Natural killer cell (primary cell): ENCODE measurements at regions of chr2 and their contacts with region 1.

Region 1: GRCh38 chr2:181058378-181059269 is 78.2 kb downstream of the UBE2E3 start:
- DNase-seq: peak in 1 of 2 donors; percentile 73
- ATAC-seq: peak; percentile 55 to 73 (median 70)
- H3K4me3 ChIP-seq: no peak overlapping the region
- H3K4me3 Mint-ChIP-seq: no peak overlapping the region
- H3K27ac ChIP-seq: no peak overlapping the region
- H3K27ac Mint-ChIP-seq: no peak overlapping the region
- H3K4me1 ChIP-seq: no peaks in the 10 kb centered on the region
- H3K4me1 Mint-ChIP-seq: peaks cover 2 to 20% of the 10 kb centered on the region in 2 donors
- H3K27me3 ChIP-seq: no peaks in the 10 kb centered on the region
- H3K27me3 Mint-ChIP-seq: no peaks in the 10 kb centered on the region
- CTCF ChIP-seq: peak; percentile 92

Region 2: DNA sequence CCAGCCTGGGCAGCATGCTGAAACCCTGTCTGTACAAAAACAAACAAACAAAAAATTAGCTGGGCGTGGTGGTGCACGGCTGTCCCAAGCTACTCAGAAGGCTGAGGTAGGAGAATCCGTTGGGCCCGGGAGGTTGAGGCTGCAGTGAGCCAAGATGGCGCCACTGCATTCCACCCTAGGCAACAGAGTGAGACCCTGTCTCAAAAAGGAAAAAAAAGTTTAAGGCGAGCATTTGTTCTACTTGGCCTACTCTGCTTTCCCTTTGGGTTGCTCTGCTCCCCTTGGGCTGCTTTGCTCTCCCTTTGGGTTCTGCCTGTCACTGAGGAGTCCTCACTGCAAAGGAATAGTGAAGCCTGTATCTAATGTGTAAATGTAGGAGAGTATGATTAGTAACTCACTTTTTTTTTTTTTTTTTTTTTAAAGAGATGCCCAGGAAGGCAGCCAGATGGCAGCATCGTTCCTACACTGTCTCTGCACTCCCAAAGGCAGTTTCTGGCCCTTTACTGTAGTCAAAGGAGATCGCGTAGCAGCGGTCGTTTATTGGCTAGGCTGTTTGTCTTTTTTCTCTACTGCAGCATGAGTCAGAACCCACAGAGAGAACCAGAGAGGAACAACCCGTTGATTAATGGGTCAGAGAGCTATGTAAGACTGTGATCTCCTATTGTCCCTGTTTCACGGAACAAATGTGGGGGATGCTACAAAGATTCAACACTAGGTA is 933.2 kb before region 1 on chr2:
- intact Hi-C with region 1: loop called (anchors 1 kb)
- DNase-seq: peak in 1 of 2 donors; percentile 67
- ATAC-seq: peak; percentile 63 to 83 (median 79)
- H3K4me3 ChIP-seq: no peak overlapping the region
- H3K4me3 Mint-ChIP-seq: no peak overlapping the region
- H3K27ac ChIP-seq: no peak overlapping the region
- H3K27ac Mint-ChIP-seq: no peak overlapping the region
- H3K4me1 ChIP-seq: no peaks in the 10 kb centered on the region
- H3K4me1 Mint-ChIP-seq: peaks cover 0 to 5% of the 10 kb centered on the region in 2 donors
- H3K27me3 ChIP-seq: no peaks in the 10 kb centered on the region
- H3K27me3 Mint-ChIP-seq: peaks cover 0 to 20% of the 10 kb centered on the region in 2 donors
- CTCF ChIP-seq: peak; percentile 27

Region 3: DNA sequence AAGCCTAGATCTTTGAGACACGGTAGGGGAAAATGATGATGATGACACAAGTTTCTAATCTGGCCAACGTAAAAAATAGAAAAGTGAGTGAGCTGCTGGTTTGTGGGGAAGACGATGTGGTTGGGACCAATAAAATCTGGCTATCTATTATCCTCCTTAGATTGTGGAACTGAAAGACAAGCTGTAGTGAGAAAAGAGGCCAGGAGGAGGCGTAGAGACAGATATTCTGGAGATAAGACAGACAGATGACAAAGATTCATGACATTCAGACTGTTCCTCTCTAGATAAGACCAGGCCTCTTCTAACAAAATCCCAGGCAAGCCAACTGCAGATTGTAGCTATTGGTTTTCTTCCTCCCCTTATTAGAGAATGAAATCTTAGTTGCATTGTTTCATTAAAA is 454.5 kb before region 1 on chr2:
- intact Hi-C with region 1: loop called (anchors 5 kb)
- DNase-seq: peak in 1 of 2 donors; percentile 24
- ATAC-seq: no peak
- H3K4me3 ChIP-seq: no peak overlapping the region
- H3K4me3 Mint-ChIP-seq: no peak overlapping the region
- H3K27ac ChIP-seq: no peak overlapping the region
- H3K27ac Mint-ChIP-seq: no peak overlapping the region
- H3K4me1 ChIP-seq: no peaks in the 10 kb centered on the region
- H3K4me1 Mint-ChIP-seq: no peaks in the 10 kb centered on the region
- H3K27me3 ChIP-seq: no peaks in the 10 kb centered on the region
- H3K27me3 Mint-ChIP-seq: no peaks in the 10 kb centered on the region
- CTCF ChIP-seq: no peak

Region 4: DNA sequence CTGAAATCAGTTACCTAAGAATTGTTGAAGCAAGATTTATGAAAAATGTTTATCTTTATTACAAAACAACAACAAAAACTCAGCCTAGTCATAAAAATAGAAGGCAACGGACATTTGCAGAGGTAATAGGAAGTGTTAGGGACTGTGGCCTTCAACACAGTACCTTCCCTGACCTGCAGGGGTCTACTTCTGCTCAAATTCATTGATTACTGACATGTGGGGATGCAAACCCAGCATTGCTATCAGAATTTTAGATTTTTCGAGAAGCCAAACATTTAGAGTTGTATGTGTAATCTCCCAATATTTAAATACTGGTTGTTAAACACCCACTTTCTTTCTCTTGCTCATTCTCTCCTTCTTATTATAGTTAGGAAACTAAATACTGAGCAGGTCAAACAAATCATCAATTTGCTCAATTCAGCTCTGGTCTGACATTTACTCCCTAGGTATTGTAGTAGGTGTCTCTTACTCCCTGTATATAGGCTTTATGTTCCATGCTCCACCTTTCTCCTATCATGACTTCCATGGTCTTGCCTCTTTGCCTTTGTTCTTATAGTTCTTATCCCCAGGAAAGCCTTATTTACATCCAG is 120.3 kb after region 1 on chr2:
- intact Hi-C with region 1: no loop called
- DNase-seq: peak in 1 of 2 donors; percentile 73
- ATAC-seq: peak; percentile 55 to 79 (median 62)
- H3K4me3 ChIP-seq: no peak overlapping the region
- H3K4me3 Mint-ChIP-seq: no peak overlapping the region
- H3K27ac ChIP-seq: no peak overlapping the region
- H3K27ac Mint-ChIP-seq: peak overlapping the region in 1 of 2 donors; percentile 3
- H3K4me1 ChIP-seq: no peaks in the 10 kb centered on the region
- H3K4me1 Mint-ChIP-seq: peaks cover 23 to 29% of the 10 kb centered on the region in 2 donors
- H3K27me3 ChIP-seq: no peaks in the 10 kb centered on the region
- H3K27me3 Mint-ChIP-seq: no peaks in the 10 kb centered on the region
- CTCF ChIP-seq: peak; percentile 56